Activated B cell treated with CpG ODN at 0.5 μM for 24 hours (primary cell): ENCODE measurements at regions of chr14 and their contacts with region 1.

Region 1: DNA sequence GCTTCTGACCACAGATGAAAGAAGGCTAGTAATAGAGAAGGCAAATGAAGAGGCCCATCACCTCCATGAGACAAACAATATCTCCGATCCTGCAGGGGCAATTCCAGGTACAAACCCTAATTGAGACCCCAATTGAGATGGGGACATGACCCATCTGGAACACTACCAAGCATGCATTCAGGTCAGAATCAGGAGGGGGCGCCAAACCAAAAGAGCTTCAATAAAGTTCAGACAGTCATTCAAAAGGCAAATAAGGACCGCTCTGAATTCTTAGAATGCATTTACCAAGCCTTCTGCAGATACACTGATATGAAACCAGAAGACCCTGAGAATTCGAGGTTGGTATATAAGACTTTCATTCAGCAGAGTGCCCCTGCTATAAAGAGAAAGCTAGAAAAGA is 10.2 kb upstream of the EDDM3B start:
- DNase-seq: no peak
- ATAC-seq: peak; percentile 25
- H3K4me3 Mint-ChIP-seq: no peak overlapping the region
- H3K27ac Mint-ChIP-seq: no peak overlapping the region
- H3K4me1 Mint-ChIP-seq: peaks cover 2% of the 10 kb centered on the region
- H3K27me3 Mint-ChIP-seq: no peaks in the 10 kb centered on the region
- CTCF ChIP-seq: no peak

Region 2: GRCh38 chr14:20818861-20819260 is 60.9 kb after region 1 on chr14:
- CTCF ChIA-PET with region 1: no interaction called
- POLR2A ChIA-PET with region 1: interaction called, 4 read pairs
- intact Hi-C with region 1: loop called (anchors 5 kb)
- DNase-seq: no peak
- ATAC-seq: no peak
- H3K4me3 Mint-ChIP-seq: no peak overlapping the region
- H3K27ac Mint-ChIP-seq: no peak overlapping the region
- H3K4me1 Mint-ChIP-seq: peaks cover 28% of the 10 kb centered on the region
- H3K27me3 Mint-ChIP-seq: no peaks in the 10 kb centered on the region
- CTCF ChIP-seq: no peak

Region 3: GRCh38 chr14:20873370-20874177 is 115.6 kb after region 1 on chr14:
- CTCF ChIA-PET with region 1: interaction called, 8 read pairs
- POLR2A ChIA-PET with region 1: no interaction called
- intact Hi-C with region 1: loop called (anchors 1 kb)
- DNase-seq: peak; percentile 66
- ATAC-seq: peak; percentile 71
- H3K4me3 Mint-ChIP-seq: no peak overlapping the region
- H3K27ac Mint-ChIP-seq: no peak overlapping the region
- H3K4me1 Mint-ChIP-seq: peaks cover 8% of the 10 kb centered on the region
- H3K27me3 Mint-ChIP-seq: peaks cover 26% of the 10 kb centered on the region
- CTCF ChIP-seq: peak; percentile 87

Region 4: DNA sequence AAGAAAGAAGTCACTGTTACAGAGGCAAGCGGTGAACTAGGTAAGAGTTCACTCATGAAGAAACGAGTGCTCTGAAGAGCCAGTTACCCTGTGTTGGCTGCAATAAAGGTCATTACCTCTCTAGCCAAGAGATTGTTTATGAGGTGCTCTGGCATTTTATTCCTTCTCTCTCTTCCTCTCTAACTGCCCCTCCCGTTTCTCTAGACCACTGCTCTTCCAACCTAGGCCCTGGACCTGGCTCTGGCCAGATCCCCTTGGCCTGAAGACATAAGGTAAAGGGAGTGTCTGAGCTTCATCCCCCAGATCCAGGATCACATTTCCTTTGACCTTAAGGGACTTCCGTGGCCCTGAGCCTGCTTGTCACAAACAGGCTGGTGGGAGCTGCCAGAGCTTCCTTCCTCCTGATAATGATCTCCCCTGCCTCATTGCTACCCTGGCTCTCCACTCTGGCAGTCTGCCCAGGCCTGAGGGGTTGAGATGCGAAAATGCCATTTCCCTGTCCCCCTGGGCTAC is 286.2 kb after region 1 on chr14:
- CTCF ChIA-PET with region 1: no interaction called
- POLR2A ChIA-PET with region 1: no interaction called
- intact Hi-C with region 1: no loop called
- DNase-seq: no peak
- ATAC-seq: no peak
- H3K4me3 Mint-ChIP-seq: no peak overlapping the region
- H3K27ac Mint-ChIP-seq: no peak overlapping the region
- H3K4me1 Mint-ChIP-seq: no peaks in the 10 kb centered on the region
- H3K27me3 Mint-ChIP-seq: peaks cover 29% of the 10 kb centered on the region
- CTCF ChIP-seq: no peak